B cell (primary cell): ENCODE measurements at regions of chr4 and their contacts with region 1.

Region 1: GRCh38 chr4:103008875-103009729 is 10.4 kb downstream of the SLC9B1 start:
- DNase-seq: peak; percentile 79
- ATAC-seq: peak; percentile 67
- H3K4me3 ChIP-seq: no peak overlapping the region
- H3K4me3 Mint-ChIP-seq: no peak overlapping the region
- H3K27ac ChIP-seq: no peak overlapping the region
- H3K27ac Mint-ChIP-seq: no peak overlapping the region
- H3K4me1 ChIP-seq: no peaks in the 10 kb centered on the region
- H3K4me1 Mint-ChIP-seq: no peaks in the 10 kb centered on the region
- H3K27me3 ChIP-seq: no peaks in the 10 kb centered on the region
- H3K27me3 Mint-ChIP-seq: no peaks in the 10 kb centered on the region
- CTCF ChIP-seq: peak; percentile 87

Region 2: DNA sequence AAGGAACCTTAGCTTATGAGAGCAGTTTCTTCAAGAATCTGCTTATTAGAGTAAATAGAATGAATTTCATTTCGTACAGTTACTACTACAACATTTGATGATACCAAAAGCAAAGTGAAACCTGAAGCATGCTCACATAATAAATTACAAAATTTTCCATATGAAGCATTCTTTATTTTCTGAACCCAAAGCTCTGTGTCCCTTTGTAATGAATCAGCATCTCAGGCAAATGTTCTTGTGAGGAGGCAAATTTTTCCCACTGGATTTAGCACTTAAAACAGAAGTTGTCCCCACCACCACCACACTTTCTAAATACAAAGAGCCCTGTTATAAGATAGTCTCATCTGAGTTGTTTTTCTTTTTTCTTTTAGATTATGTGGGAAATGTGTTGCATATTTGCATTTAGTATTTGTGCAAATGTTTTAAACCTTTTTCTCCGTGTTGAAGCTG is 578.6 kb before region 1 on chr4:
- CTCF ChIA-PET with region 1: interaction called, 14 read pairs
- POLR2A ChIA-PET with region 1: no interaction called
- intact Hi-C with region 1: loop called (anchors 1 kb)
- DNase-seq: no peak
- ATAC-seq: no peak
- H3K4me3 ChIP-seq: peak overlapping the region; percentile 48 to 79 (median 61)
- H3K4me3 Mint-ChIP-seq: peak overlapping the region; percentile 91
- H3K27ac ChIP-seq: peak overlapping the region in 1 of 2 donors; percentile 38
- H3K27ac Mint-ChIP-seq: peak overlapping the region; percentile 59
- H3K4me1 ChIP-seq: peaks cover 0 to 5% of the 10 kb centered on the region in 2 donors
- H3K4me1 Mint-ChIP-seq: peaks cover 5% of the 10 kb centered on the region
- H3K27me3 ChIP-seq: no peaks in the 10 kb centered on the region
- H3K27me3 Mint-ChIP-seq: no peaks in the 10 kb centered on the region
- CTCF ChIP-seq: no peak

Region 3: DNA sequence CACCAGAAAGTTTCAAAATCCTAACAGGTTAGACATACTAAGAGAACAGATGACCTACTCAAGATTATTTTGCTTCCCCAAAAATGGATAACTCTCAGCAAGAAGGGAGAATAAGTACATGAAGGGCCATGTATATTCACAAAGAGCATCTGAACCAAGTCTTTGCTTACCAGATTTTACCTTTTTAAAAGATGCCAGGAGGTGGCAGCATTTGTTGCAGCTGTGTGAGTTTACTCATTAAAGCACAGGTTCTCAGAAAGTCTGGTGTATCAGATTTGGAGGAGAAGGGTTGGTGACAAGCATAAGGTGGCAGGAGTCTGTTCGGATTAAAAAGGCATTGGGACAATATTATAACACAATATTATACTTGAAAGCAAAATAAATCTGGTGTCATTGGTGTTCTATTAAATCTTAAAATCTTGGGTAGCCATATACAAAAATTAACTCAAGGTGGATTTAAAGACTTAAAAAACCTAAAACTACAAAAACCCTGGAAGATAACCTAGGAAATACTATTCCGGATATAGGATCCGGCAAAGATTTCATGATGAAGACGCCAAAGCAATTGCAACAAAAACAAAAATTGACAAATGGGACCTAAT is 559.2 kb before region 1 on chr4:
- CTCF ChIA-PET with region 1: interaction called, 18 read pairs
- POLR2A ChIA-PET with region 1: no interaction called
- intact Hi-C with region 1: loop called (anchors 1 kb)
- DNase-seq: peak; percentile 76
- ATAC-seq: peak; percentile 60
- H3K4me3 ChIP-seq: no peak overlapping the region
- H3K4me3 Mint-ChIP-seq: no peak overlapping the region
- H3K27ac ChIP-seq: no peak overlapping the region
- H3K27ac Mint-ChIP-seq: no peak overlapping the region
- H3K4me1 ChIP-seq: peaks cover 4 to 8% of the 10 kb centered on the region in 2 donors
- H3K4me1 Mint-ChIP-seq: peaks cover 5% of the 10 kb centered on the region
- H3K27me3 ChIP-seq: no peaks in the 10 kb centered on the region
- H3K27me3 Mint-ChIP-seq: no peaks in the 10 kb centered on the region
- CTCF ChIP-seq: peak; percentile 71

Region 4: GRCh38 chr4:102612824-102613366 is 396.2 kb before region 1 on chr4:
- CTCF ChIA-PET with region 1: interaction called, 13 read pairs
- POLR2A ChIA-PET with region 1: no interaction called
- intact Hi-C with region 1: no loop called
- DNase-seq: peak; percentile 43
- ATAC-seq: peak; percentile 66
- H3K4me3 ChIP-seq: no peak overlapping the region
- H3K4me3 Mint-ChIP-seq: no peak overlapping the region
- H3K27ac ChIP-seq: peak overlapping the region; percentile 38 to 67
- H3K27ac Mint-ChIP-seq: peak overlapping the region; percentile 77
- H3K4me1 ChIP-seq: peaks cover 11 to 12% of the 10 kb centered on the region in 2 donors
- H3K4me1 Mint-ChIP-seq: peaks cover 22% of the 10 kb centered on the region
- H3K27me3 ChIP-seq: no peaks in the 10 kb centered on the region
- H3K27me3 Mint-ChIP-seq: no peaks in the 10 kb centered on the region
- CTCF ChIP-seq: no peak

Region 5: GRCh38 chr4:102620697-102621497 is 388.2 kb before region 1 on chr4:
- CTCF ChIA-PET with region 1: interaction called, 15 read pairs
- POLR2A ChIA-PET with region 1: no interaction called
- intact Hi-C with region 1: loop called (anchors 1 kb)
- DNase-seq: peak; percentile 37
- ATAC-seq: peak; percentile 57
- H3K4me3 ChIP-seq: no peak overlapping the region
- H3K4me3 Mint-ChIP-seq: no peak overlapping the region
- H3K27ac ChIP-seq: no peak overlapping the region
- H3K27ac Mint-ChIP-seq: no peak overlapping the region
- H3K4me1 ChIP-seq: peaks cover 3 to 6% of the 10 kb centered on the region in 2 donors
- H3K4me1 Mint-ChIP-seq: peaks cover 9% of the 10 kb centered on the region
- H3K27me3 ChIP-seq: no peaks in the 10 kb centered on the region
- H3K27me3 Mint-ChIP-seq: no peaks in the 10 kb centered on the region
- CTCF ChIP-seq: peak; percentile 30

Region 6: DNA sequence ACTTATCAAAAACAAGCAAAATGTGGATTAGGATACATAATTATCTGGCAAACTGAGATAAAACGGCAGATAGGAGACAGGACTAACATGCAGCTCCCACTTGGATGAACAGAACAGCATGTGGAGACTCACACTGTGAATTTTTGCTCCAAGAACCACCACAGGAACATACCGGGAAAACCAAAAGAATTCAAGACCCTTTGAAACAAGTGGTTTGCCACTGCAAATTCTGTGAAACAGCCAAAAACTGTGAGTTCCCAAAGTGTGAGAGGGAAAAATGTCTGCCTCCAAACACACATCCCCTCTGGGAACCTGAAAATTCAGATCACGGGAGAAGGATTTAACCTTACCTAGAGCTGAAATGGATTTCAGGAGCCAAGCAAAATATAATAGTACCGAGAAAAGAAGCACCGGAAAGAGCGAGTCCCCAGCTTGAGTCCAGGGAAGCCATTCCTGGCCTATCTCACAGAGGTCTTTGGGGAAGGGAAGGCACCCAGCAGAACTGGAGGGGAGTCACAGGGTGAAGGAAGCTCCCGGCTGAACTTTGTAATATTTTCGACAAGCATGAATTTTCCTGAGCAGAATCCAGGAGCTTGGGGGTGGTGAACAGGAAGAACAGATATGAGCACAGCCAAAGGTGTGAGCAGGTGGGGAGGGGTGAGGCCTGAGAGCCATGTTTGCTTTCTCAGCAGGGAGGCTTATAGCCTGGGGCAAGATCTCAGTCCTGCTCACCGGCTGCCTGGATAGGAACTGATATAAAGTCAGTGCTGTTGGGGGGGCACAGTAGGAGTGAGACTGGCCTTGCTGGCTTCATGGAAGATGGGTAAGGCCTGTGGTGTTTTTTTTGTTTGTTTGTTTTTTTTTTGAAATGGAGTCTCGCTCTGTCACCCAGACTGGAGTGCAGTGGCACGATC is 272.2 kb before region 1 on chr4:
- CTCF ChIA-PET with region 1: interaction called, 3 read pairs
- POLR2A ChIA-PET with region 1: no interaction called
- intact Hi-C with region 1: loop called (anchors 2 kb)
- DNase-seq: no peak
- ATAC-seq: no peak
- H3K4me3 ChIP-seq: no peak overlapping the region
- H3K4me3 Mint-ChIP-seq: no peak overlapping the region
- H3K27ac ChIP-seq: no peak overlapping the region
- H3K27ac Mint-ChIP-seq: no peak overlapping the region
- H3K4me1 ChIP-seq: peaks cover 10 to 15% of the 10 kb centered on the region in 2 donors
- H3K4me1 Mint-ChIP-seq: peaks cover 52% of the 10 kb centered on the region
- H3K27me3 ChIP-seq: no peaks in the 10 kb centered on the region
- H3K27me3 Mint-ChIP-seq: no peaks in the 10 kb centered on the region
- CTCF ChIP-seq: no peak